GM12878 (cell line): ENCODE measurements at regions of chr5 and their contacts with region 1.

Region 1: DNA sequence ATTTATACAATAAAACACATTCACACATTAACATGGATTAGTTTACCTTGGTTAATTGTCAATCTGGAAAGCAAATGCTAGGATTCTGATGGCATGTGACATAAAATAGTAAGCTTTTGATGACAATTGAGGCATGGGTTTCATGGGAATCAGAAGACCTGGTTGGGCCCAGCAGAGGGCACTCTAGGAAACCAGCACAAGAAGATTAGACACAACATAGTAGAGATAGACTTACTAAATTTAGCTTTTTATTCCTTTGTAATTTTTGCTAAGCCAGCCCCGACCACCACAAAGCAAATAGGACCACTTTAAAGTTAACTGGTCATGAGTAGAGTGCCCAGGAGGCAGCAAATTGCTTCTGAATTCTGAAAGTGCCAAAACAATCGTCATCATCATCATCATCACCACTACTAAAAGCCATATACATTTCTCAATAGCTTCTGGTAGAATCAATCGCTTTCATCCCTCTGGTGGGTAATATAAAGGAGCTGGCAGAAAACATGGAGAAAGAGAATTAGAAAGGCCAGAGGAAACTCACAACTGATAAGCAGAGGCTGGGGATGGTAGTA is 163.2 kb downstream of the ARRDC3 start:
- DNase-seq: no peak
- ATAC-seq: no peak; the same call in 2 of the 3 replicates
- H3K4me3 ChIP-seq: no peak overlapping the region
- H3K27ac ChIP-seq: no peak overlapping the region
- H3K4me1 ChIP-seq: no peaks in the 10 kb centered on the region
- H3K27me3 ChIP-seq: no peaks in the 10 kb centered on the region; a peak in 1 of 4 replicates
- CTCF ChIP-seq: peak; percentile 36 to 47 (median 39)
- EP300 ChIP-seq: no peak
- POLR2A ChIP-seq: no peak
- RAD21 ChIP-seq: peak; percentile 41

Region 2: DNA sequence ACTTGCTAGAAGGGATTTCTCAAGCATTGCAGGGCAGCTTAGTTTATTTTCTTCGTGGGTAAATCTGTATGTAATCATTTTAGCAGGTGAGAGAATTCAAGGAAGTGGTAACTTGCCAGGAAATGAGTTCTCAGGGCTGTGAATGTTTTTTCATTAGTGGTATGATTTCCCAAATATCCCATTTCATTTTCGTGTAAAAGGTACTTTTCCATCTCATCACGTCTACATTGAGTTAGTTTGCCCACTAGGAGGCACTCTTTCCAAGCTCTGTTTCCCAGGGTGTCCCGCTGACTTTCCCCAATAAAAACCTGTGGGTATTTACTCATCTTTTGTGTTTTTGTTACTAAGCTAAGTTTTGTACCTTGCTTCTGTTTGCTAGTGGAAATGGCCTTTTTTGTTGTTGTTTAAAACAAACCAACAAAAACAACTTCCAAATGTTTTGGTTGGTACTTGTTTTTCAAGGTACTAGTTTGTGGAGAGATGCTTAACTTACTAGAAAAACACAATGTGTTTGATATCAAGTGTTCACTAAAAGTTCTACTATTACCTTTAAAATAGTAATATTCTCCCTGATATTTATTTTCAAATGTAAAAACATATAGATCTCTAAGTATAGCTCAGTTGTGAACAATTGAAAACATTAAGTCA is 287.7 kb before region 1 on chr5:
- CTCF ChIA-PET with region 1: interaction called, 24 read pairs
- POLR2A ChIA-PET with region 1: no interaction called
- RAD21 ChIA-PET with region 1: interaction called, 4 read pairs
- SMC1A ChIA-PET with region 1: interaction called, 5 read pairs
- in situ Hi-C with region 1: no loop called
- intact Hi-C with region 1: loop called (anchors 10 kb)
- DNase-seq: peak; percentile 12
- ATAC-seq: peak; percentile 74
- H3K4me3 ChIP-seq: no peak overlapping the region
- H3K27ac ChIP-seq: no peak overlapping the region
- H3K4me1 ChIP-seq: no peaks in the 10 kb centered on the region
- H3K27me3 ChIP-seq: no peaks in the 10 kb centered on the region
- CTCF ChIP-seq: peak; percentile 69 to 74 (median 71)
- EP300 ChIP-seq: no peak
- POLR2A ChIP-seq: no peak
- RAD21 ChIP-seq: peak; percentile 83

Region 3: DNA sequence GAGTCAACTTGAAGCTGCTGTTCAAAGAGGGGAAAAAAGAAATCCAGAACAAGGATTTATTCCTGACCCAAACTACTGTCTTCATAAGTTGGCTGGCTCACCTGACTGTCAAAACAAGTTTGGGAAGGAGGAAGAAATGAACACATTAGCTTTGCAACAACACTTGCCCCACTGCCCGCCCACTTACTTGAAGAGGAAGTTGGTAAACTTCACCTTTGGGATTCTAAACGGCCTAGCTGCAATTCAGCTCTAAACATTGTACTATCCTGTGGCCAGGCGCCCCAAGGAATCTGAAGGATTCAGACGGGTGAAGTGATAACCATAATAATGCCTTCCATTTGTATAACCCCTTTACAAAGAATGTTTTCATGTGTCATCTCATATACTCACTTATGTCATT is 36.1 kb before region 1 on chr5:
- CTCF ChIA-PET with region 1: interaction called, 15 read pairs
- POLR2A ChIA-PET with region 1: no interaction called
- RAD21 ChIA-PET with region 1: interaction called, 4 read pairs
- SMC1A ChIA-PET with region 1: interaction called, 7 read pairs
- in situ Hi-C with region 1: no loop called
- intact Hi-C with region 1: no loop called
- DNase-seq: no peak
- ATAC-seq: no peak
- H3K4me3 ChIP-seq: no peak overlapping the region
- H3K27ac ChIP-seq: no peak overlapping the region
- H3K4me1 ChIP-seq: peaks cover 5% of the 10 kb centered on the region; the same call in 1 of the 2 replicates
- H3K27me3 ChIP-seq: no peaks in the 10 kb centered on the region
- CTCF ChIP-seq: no peak
- EP300 ChIP-seq: no peak
- POLR2A ChIP-seq: no peak
- RAD21 ChIP-seq: no peak